ENCODE measurements at regions of chr18 and their contacts with region 1.

Region 1: DNA sequence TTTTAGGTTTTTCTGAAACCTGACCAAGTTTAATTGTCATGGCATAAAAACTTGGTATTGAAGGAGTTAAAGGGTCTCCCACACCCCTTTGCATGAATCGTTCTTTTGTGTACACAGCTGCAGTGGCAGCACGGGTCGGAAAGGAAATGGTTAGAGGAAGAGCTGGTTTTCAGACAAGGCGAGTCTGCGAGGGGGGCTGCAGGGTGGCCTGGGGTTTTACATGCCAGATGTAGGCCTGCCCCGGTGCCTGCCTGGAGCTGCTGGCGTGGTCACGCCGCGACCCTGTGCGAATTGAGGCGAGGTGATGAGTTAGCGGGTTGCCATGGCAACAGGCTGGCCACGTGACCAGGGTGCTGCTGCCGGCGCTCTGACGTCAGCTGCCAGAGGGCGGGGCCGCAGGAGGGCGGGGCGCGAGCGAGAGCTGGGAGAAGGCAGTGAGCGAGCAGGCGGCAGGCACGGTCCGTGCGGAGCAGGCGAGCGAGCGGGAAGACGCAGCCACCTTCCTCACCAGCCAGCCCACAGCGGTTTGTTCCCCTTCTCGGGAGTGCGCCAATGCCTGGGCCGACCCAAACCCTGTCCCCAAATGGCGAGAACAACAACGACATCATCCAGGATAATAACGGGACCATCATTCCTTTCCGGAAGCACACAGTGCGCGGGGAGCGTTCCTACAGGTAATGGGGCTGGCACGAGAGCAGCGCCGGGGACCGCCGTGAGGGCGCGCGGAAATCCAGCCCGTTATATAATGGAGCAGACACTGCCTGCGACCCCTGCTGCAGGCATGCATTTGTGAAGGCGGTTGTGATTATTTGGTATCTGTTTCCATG is at the start of gene MAPRE2:
- DNase-seq: peak; percentile 99
- H3K4me3 ChIP-seq: peak within 1 kb of the TSS; percentile 48 to 73 (median 58)
- H3K27ac ChIP-seq: peak within 1 kb of the TSS; percentile 85 to 89 (median 86)
- H3K4me1 ChIP-seq: peaks cover 7 to 47% (median 21%) of the 10 kb centered on the region in 4 donors
- H3K27me3 ChIP-seq: no peaks in the 10 kb centered on the region
- CTCF ChIP-seq: peak in 1 of 5 experiments; percentile 15
- EP300 ChIP-seq: no peak
- POLR2A ChIP-seq: peak; percentile 93
- total RNA-seq, gene MAPRE2: 23.1 to 102 (median 48.5) TPM

Region 2: DNA sequence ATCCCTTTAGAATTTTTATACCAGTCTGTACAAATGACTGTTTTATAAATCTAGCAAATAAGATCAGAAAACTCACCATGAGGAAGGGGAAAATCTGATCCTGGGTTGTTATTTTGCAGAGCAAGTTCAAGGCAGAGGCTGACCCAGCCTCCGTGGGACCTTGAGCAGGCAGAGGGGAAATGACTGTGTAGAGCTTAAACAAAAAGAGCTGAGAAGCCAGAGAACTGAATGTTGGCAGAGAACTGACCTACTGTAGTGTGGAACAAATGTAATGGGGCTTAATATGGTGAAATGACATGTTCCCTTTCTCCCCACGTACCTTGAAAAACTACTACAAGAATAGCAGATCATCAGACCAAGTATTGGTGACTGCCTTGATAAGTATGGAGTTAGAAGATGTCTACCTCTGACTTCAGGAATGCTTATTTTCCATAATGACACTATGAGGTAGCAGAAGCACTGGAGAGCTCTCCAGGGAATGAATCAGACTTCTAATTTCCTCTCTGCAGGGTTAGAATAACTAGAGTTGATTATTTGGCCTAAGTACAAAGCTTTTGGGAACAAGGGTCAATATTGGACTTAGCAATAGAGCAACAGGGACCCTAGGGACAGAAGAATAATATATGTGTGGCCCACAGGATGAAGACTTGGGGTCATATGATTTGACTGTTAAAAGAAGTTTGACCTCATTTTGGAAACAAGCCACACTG is 1905.1 kb before region 1 on chr18:
- in situ Hi-C with region 1: no loop called
- intact Hi-C with region 1: loop called (anchors 10 kb)
- DNase-seq: no peak
- H3K4me3 ChIP-seq: no peak overlapping the region
- H3K27ac ChIP-seq: no peak overlapping the region
- H3K4me1 ChIP-seq: no peaks in the 10 kb centered on the region
- H3K27me3 ChIP-seq: no peaks in the 10 kb centered on the region
- CTCF ChIP-seq: no peak
- EP300 ChIP-seq: no peak
- POLR2A ChIP-seq: no peak

Region 3: GRCh38 chr18:34976899-34977837 is 64.0 kb before region 1 on chr18:
- in situ Hi-C with region 1: no loop called
- intact Hi-C with region 1: no loop called
- DNase-seq: peak; percentile 93
- H3K4me3 ChIP-seq: peak overlapping the region; percentile 71 to 92 (median 84)
- H3K27ac ChIP-seq: peak overlapping the region; percentile 82 to 92 (median 87)
- H3K4me1 ChIP-seq: peaks cover 0 to 23% (median 7%) of the 10 kb centered on the region in 4 donors
- H3K27me3 ChIP-seq: no peaks in the 10 kb centered on the region
- CTCF ChIP-seq: no peak
- EP300 ChIP-seq: no peak
- POLR2A ChIP-seq: peak; percentile 66

Region 4: DNA sequence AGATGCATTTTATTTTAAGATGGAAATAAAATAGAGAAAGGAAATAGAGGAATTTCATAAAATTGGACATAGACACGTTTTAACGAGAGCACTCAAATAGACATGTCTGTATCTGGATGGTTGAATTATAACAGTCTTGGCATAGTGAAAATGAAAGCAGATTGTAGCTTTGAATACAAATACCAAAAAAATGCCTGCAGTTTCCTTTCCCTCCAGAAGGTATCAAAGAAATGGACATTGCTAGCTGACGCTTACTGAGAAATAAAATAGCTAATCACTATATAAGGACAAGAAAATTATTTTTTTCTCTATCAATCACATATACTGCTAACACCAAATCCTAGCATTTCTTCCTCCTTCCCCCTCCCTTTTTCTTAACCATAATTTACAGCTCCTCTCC is 11.4 kb before region 1 on chr18:
- in situ Hi-C with region 1: no loop called
- intact Hi-C with region 1: no loop called
- DNase-seq: no peak
- H3K4me3 ChIP-seq: peak overlapping the region in 1 of 4 donors; percentile 37
- H3K27ac ChIP-seq: peak overlapping the region; percentile 45 to 69 (median 60)
- H3K4me1 ChIP-seq: peaks cover 0 to 34% (median 15%) of the 10 kb centered on the region in 4 donors
- H3K27me3 ChIP-seq: no peaks in the 10 kb centered on the region
- CTCF ChIP-seq: peak in 4 of 5 experiments; percentile 15 to 49 (median 20)
- EP300 ChIP-seq: no peak
- POLR2A ChIP-seq: no peak

Region 5: DNA sequence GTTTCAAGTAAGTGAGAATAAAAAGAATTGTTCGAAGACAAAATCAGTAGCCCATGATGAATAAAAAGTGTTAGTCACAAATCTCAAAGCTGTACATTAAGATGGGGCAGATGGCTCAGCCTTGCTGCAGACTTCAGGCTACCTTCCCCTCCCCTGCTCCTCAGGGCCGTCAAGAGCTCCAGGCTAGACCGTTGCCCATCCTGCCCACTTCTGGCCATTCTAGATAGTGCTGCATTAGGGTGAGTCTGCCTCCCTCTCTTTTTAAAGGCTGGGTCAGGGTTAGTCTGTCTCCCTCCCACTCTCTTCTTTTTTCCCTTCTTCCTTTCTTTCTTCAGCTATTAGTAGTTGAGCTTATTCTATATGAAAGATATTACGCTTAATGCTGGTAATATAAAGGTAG is 86.0 kb after region 1 on chr18:
- in situ Hi-C with region 1: no loop called
- intact Hi-C with region 1: no loop called
- DNase-seq: no peak
- H3K4me3 ChIP-seq: no peak overlapping the region
- H3K27ac ChIP-seq: no peak overlapping the region
- H3K4me1 ChIP-seq: no peaks in the 10 kb centered on the region
- H3K27me3 ChIP-seq: no peaks in the 10 kb centered on the region
- CTCF ChIP-seq: no peak
- EP300 ChIP-seq: no peak
- POLR2A ChIP-seq: no peak

Measured in transverse colon (tissue), 4 donors.